ENCODE measurements at regions of chr7 and their contacts with region 1.

Region 1: GRCh38 chr7:119197877-119198527 is 973.5 kb downstream of the ANKRD7 start:
- DNase-seq: peak; percentile 37
- ATAC-seq: peak; percentile 39
- H3K4me3 Mint-ChIP-seq: no peak overlapping the region
- H3K27ac Mint-ChIP-seq: no peak overlapping the region
- H3K4me1 Mint-ChIP-seq: no peaks in the 10 kb centered on the region
- H3K27me3 Mint-ChIP-seq: no peaks in the 10 kb centered on the region

Region 2: GRCh38 chr7:118352854-118353453 is 845.0 kb before region 1 on chr7:
- CTCF ChIA-PET with region 1: no interaction called
- POLR2A ChIA-PET with region 1: no interaction called
- intact Hi-C with region 1: loop called in 1 of 2 experiments (anchors 5 kb)
- DNase-seq: no peak
- ATAC-seq: no peak
- H3K4me3 Mint-ChIP-seq: no peak overlapping the region
- H3K27ac Mint-ChIP-seq: no peak overlapping the region
- H3K4me1 Mint-ChIP-seq: no peaks in the 10 kb centered on the region
- H3K27me3 Mint-ChIP-seq: peaks cover 5% of the 10 kb centered on the region

Measured in activated CD4-positive, alpha-beta T cell treated with anti-CD3 and anti-CD28 coated beads for 36 hours (primary cell).